ENCODE measurements at regions of chr9 and their contacts with region 1.

Region 1: DNA sequence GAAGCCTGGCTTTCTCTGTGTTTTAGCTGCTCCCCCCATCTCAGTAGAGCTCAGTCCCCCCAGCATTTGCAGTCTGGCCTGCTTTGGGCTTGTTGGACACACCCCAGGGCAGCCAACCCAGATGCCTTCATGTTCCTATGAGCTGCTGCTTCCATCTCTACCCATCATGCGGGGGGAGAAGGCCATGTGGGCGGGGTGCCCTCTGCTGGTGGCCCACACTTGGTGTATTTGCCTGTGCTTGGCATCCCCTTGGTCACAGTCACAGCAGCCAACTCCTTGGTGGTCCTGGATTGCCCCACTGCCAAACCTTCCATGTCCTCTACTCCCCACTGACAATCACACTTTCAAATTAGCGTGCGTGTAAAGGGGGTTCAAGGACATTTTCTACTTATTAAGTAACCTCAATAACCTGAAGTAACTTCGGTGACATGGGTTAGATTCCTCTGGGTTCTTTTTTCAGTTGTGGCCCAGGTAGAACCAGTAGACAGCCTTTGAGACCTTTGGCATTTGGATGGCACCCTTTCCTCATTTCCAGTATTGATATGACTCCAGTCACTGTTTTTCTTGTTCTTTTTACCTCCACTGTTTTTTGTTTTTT is 42.8 kb downstream of the SNX30 start:
- DNase-seq: peak; percentile 93
- H3K4me3 Mint-ChIP-seq: no peak overlapping the region
- H3K27ac Mint-ChIP-seq: no peak overlapping the region
- H3K4me1 Mint-ChIP-seq: peaks cover 4% of the 10 kb centered on the region
- H3K27me3 Mint-ChIP-seq: no peaks in the 10 kb centered on the region

Region 2: GRCh38 chr9:112086627-112087026 is 706.7 kb before region 1 on chr9:
- intact Hi-C with region 1: loop called (anchors 5 kb)
- DNase-seq: no peak
- H3K4me3 Mint-ChIP-seq: no peak overlapping the region
- H3K27ac Mint-ChIP-seq: no peak overlapping the region
- H3K4me1 Mint-ChIP-seq: no peaks in the 10 kb centered on the region
- H3K27me3 Mint-ChIP-seq: no peaks in the 10 kb centered on the region

Region 3: GRCh38 chr9:112443200-112443599 is 350.1 kb before region 1 on chr9:
- intact Hi-C with region 1: loop called (anchors 1 kb)
- DNase-seq: peak; percentile 72
- H3K4me3 Mint-ChIP-seq: no peak overlapping the region
- H3K27ac Mint-ChIP-seq: no peak overlapping the region
- H3K4me1 Mint-ChIP-seq: no peaks in the 10 kb centered on the region
- H3K27me3 Mint-ChIP-seq: no peaks in the 10 kb centered on the region

Region 4: DNA sequence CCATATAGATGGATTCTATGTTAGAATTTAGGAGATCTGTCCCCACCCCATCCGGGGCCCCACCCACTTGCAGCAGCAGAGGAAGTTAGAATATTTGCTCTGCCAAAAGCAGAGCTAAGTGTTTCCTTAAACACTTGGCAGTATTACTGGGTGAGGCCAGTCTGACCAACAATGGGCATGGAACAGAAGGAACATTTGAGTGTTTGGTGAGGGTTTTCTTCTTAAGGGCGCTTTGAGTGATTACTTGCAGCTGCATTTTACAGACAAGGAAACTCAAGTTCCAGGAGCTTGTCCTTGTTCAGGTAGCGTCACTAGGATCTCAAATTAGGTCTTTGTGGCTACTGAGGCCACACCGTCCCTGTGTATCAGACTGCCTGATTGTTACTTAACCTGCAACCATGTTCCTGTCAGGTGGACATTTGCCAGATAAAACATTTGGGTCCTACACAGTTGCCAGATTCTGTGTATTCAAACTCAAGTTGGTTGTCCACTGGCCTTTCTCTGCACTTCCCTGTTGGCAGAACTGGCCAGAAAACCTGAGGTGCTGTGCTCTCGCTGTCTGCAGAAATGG is 38.1 kb after region 1 on chr9:
- intact Hi-C with region 1: no loop called
- DNase-seq: no peak
- H3K4me3 Mint-ChIP-seq: no peak overlapping the region
- H3K27ac Mint-ChIP-seq: no peak overlapping the region
- H3K4me1 Mint-ChIP-seq: peaks cover 4% of the 10 kb centered on the region
- H3K27me3 Mint-ChIP-seq: no peaks in the 10 kb centered on the region